IMR-90 (cell line): ENCODE measurements at regions of chr9 and their contacts with region 1.

Region 1: GRCh38 chr9:81455462-81456219 is 233.7 kb downstream of the TLE1 start:
- DNase-seq: no peak
- ATAC-seq: 0 out of 2 replicates have a peak, but pooled peaks have one; percentile 33
- H3K4me3 ChIP-seq: no peak overlapping the region
- H3K27ac ChIP-seq: no peak overlapping the region
- H3K4me1 ChIP-seq: peaks cover 5% of the 10 kb centered on the region
- H3K27me3 ChIP-seq: no peaks in the 10 kb centered on the region
- CTCF ChIP-seq: no peak
- POLR2A ChIP-seq: no peak
- RAD21 ChIP-seq: no peak

Region 2: GRCh38 chr9:79694676-79695400 is 1760.8 kb before region 1 on chr9:
- CTCF ChIA-PET with region 1: interaction called, 10 read pairs
- POLR2A ChIA-PET with region 1: no interaction called
- dilution Hi-C with region 1: no loop called
- in situ Hi-C with region 1: no loop called
- intact Hi-C with region 1: no loop called
- DNase-seq: peak; percentile 92
- ATAC-seq: peak; percentile 88
- H3K4me3 ChIP-seq: no peak overlapping the region
- H3K27ac ChIP-seq: no peak overlapping the region
- H3K4me1 ChIP-seq: peaks cover 6% of the 10 kb centered on the region
- H3K27me3 ChIP-seq: no peaks in the 10 kb centered on the region
- CTCF ChIP-seq: no peak
- POLR2A ChIP-seq: no peak
- RAD21 ChIP-seq: no peak

Region 3: DNA sequence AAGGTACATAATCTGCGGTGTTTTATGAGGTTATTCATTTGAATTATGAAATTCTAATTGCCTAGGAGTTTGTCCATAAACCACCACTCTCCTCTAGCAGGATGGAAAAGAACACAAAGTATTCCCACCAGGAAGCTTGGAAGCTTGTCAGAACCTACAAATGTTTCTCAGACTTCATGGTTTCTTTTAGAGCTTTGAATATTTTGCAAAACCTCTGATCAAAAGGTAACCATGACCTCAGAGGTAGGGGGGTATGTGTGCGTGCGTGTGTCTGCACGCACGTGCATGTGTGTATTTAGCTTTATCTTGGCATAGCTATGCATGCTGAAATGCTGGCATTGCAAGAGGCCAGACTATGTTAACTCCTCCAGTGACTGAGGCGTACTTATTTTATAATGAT is 613.3 kb before region 1 on chr9:
- CTCF ChIA-PET with region 1: no interaction called
- POLR2A ChIA-PET with region 1: no interaction called
- dilution Hi-C with region 1: no loop called
- in situ Hi-C with region 1: no loop called
- intact Hi-C with region 1: no loop called
- DNase-seq: no peak
- ATAC-seq: no peak
- H3K4me3 ChIP-seq: no peak overlapping the region
- H3K27ac ChIP-seq: no peak overlapping the region
- H3K4me1 ChIP-seq: no peaks in the 10 kb centered on the region
- H3K27me3 ChIP-seq: no peaks in the 10 kb centered on the region
- CTCF ChIP-seq: no peak
- POLR2A ChIP-seq: no peak
- RAD21 ChIP-seq: no peak